Testis (tissue), 5 donors: ENCODE measurements at regions of chr3 and their contacts with region 1.

Region 1: GRCh38 chr3:184145111-184145524 is 10.0 kb downstream of the EIF2B5 start:
- DNase-seq: peak; percentile 71
- H3K4me3 ChIP-seq: no peak overlapping the region
- H3K27ac ChIP-seq: no peak overlapping the region
- H3K4me1 ChIP-seq: no peaks in the 10 kb centered on the region
- H3K27me3 ChIP-seq: no peaks in the 10 kb centered on the region
- CTCF ChIP-seq: no peak
- POLR2A ChIP-seq: no peak

Region 2: GRCh38 chr3:183201960-183202722 is 943.0 kb before region 1 on chr3:
- intact Hi-C with region 1: no loop called
- DNase-seq: no peak
- H3K4me3 ChIP-seq: no peak overlapping the region
- H3K27ac ChIP-seq: no peak overlapping the region
- H3K4me1 ChIP-seq: no peaks in the 10 kb centered on the region
- H3K27me3 ChIP-seq: no peaks in the 10 kb centered on the region
- CTCF ChIP-seq: no peak
- POLR2A ChIP-seq: no peak

Region 3: DNA sequence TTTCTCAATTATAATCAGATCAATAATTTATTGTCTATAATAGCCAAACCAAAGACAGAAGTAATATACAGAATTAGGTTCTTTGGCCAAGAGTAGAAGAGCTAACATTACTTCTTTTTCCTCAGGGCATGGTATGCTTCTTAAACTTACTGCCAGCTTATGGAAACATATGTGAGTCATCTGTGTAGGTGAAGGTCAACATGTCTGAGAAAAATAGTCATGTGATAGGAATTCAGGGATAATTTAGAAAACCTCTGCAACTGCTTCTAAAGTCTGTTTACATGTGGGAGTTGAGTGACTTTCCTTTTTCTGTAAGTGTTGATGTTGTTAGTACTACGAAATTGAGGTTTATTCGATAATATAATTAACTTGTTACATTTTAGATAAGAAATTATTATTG is 300.5 kb before region 1 on chr3:
- intact Hi-C with region 1: no loop called
- DNase-seq: no peak
- H3K4me3 ChIP-seq: no peak overlapping the region
- H3K27ac ChIP-seq: no peak overlapping the region
- H3K4me1 ChIP-seq: no peaks in the 10 kb centered on the region
- H3K27me3 ChIP-seq: no peaks in the 10 kb centered on the region
- CTCF ChIP-seq: no peak
- POLR2A ChIP-seq: no peak

Region 4: GRCh38 chr3:184229394-184230080 is 84.4 kb after region 1 on chr3 and contains the start of gene VWA5B2:
- intact Hi-C with region 1: loop called (anchors 10 kb)
- DNase-seq: peak; percentile 77
- H3K4me3 ChIP-seq: peak within 1 kb of the TSS; percentile 49 to 57
- H3K27ac ChIP-seq: no peak within 1 kb of the TSS
- H3K4me1 ChIP-seq: peaks cover 7% of the 10 kb centered on the region
- H3K27me3 ChIP-seq: no peaks in the 10 kb centered on the region
- CTCF ChIP-seq: peak in 1 of 3 experiments; percentile 37
- POLR2A ChIP-seq: no peak
- total RNA-seq, gene VWA5B2: 13.8 to 17.6 TPM

Region 5: GRCh38 chr3:184540777-184541681 is 395.9 kb after region 1 on chr3:
- intact Hi-C with region 1: no loop called
- DNase-seq: peak; percentile 79
- H3K4me3 ChIP-seq: no peak overlapping the region
- H3K27ac ChIP-seq: no peak overlapping the region
- H3K4me1 ChIP-seq: no peaks in the 10 kb centered on the region
- H3K27me3 ChIP-seq: no peaks in the 10 kb centered on the region
- CTCF ChIP-seq: peak; percentile 51 to 68 (median 58)
- POLR2A ChIP-seq: no peak